ENCODE measurements at regions of chr17 and their contacts with region 1.

Region 1: GRCh38 chr17:32253117-32253611 is 12.5 kb upstream of the RHBDL3 start:
- DNase-seq: peak; percentile 90

Region 2: DNA sequence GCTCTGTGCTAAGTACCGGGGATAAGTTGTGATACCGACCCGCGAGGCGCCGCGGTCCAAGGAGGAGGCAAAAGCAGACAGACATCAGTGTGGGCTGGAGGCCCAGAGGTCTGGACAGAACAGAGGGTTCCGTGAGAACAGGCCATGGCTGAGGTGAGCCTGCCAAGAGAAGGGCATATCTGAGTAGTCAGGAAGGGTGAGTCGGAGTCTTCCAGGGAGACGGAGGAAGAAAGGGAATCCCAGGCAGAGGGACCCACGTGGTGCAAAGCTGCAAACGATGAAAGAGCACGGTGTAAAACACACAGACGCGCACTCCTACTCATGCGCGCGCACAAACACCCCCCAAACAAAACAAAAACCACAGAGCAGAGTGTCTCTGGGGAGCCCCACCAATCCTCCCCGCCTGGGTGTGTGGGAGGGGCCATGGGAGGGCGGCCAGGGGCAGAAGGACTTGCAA is 30.6 kb after region 1 on chr17:
- intact Hi-C with region 1: no loop called
- DNase-seq: no peak

Region 3: GRCh38 chr17:32323811-32324491 is 70.8 kb after region 1 on chr17:
- intact Hi-C with region 1: loop called in 1 of 2 experiments (anchors 5 kb)
- DNase-seq: no peak

Region 4: DNA sequence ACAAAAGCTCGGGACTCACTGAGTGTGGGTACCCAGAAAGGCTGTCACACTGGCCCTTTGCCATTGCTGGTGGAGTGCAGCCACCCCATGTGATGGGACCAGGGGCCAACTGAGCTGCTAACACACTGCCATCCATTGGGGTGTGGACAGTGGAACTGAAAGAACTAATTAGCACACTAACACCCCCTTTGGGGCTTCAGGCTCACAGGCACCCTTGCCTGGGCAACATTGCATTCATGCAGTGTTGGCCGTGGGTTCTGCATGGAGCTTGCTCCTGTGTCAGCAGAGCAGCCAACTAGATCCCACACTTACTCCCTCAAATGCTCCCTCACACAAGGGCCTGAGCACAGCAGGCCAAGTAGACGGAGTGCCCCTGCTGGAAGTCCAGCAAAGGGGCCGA is 1515.9 kb after region 1 on chr17:
- intact Hi-C with region 1: loop called in 1 of 2 experiments (anchors 5 kb)
- DNase-seq: no peak

Measured in posterior vena cava (tissue), 2 donors.